Activated T-helper 1 cell treated with anti-CD3 and anti-CD28 coated beads, Interleukin-12 subunit alpha, Interleukin-12 subunit beta, Interleukin-2, Interleukin-4 antibody, amounts not matched to agents 30 ng/mL and 10 ng/mL and 1 ng/mL, durations not matched to agents 14 hours and 24 hours and 36 hours (primary cell): ENCODE measurements at regions of chr5 and their contacts with region 1.

Region 1: DNA sequence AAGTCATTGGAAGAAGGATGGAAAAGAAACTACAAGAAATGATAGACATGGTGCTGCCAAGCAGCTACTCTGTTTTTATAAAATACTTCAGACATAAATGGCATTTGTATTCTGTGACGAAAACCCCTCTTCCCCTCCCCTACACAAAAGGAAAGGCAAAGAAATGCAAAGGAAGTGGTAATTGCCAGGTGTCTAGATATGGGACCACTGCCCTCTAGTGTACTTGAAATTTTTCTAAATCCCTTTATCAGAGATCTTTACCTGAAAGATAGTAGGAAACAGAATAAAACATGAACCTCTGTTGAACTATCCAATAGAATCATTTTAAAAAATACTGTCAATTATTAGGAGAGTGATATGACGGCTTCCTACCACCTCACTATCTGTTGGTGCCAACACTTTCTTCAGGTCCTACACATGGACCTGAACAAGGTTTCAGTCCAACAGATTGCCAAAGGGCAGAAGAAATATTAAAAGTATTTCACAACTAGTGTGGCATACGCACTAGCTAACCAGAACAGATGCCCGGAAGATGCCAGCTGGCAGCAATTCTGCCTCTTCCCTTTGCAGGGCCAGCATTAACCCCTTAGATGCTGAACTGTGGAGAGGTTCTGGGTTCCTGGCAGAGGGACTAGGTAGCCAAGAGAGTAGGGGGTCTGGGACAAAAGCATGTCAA is 104.1 kb downstream of the TSSK1B start:
- DNase-seq: no peak
- H3K4me3 Mint-ChIP-seq: no peak overlapping the region
- H3K27ac Mint-ChIP-seq: no peak overlapping the region
- H3K4me1 Mint-ChIP-seq: peaks cover 14% of the 10 kb centered on the region
- H3K27me3 Mint-ChIP-seq: peaks cover 6% of the 10 kb centered on the region

Region 2: DNA sequence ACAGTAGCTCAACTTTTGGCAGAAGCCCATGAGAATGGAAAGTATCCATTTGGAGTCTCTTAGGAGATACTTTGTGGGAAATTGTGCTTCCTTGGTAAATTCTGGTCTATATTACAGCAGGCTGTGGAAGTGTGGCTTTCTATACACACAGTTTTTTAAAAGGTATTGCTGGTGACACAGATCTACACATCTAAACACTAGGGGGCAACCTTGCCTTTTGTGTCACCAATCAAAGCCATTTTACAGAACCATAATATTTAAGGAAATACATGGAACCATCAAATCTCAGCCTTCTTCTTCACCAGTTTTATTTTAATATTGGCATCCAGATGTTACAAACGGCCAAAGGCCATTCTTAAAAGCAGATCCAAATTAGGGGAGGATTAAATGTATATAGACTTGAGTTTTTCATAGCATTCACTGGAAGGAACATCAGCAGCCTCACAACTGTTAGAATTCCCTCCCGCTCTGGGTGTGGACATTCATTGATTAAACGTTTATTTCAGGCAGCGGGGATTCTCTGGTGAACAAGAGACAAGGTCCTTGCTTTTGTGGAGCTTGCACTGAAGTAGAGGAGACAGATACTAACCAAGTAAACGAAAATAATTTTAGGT is 779.1 kb before region 1 on chr5:
- intact Hi-C with region 1: loop called (anchors 2 kb)
- DNase-seq: peak; percentile 14
- H3K4me3 Mint-ChIP-seq: no peak overlapping the region
- H3K27ac Mint-ChIP-seq: no peak overlapping the region
- H3K4me1 Mint-ChIP-seq: no peaks in the 10 kb centered on the region
- H3K27me3 Mint-ChIP-seq: peaks cover 15% of the 10 kb centered on the region

Region 3: GRCh38 chr5:113378959-113379541 is 48.4 kb after region 1 on chr5:
- intact Hi-C with region 1: loop called (anchors 2 kb)
- DNase-seq: peak; percentile 24
- H3K4me3 Mint-ChIP-seq: peak overlapping the region; percentile 24
- H3K27ac Mint-ChIP-seq: no peak overlapping the region
- H3K4me1 Mint-ChIP-seq: peaks cover 36% of the 10 kb centered on the region
- H3K27me3 Mint-ChIP-seq: peaks cover 21% of the 10 kb centered on the region

Region 4: GRCh38 chr5:113390224-113390623 is 59.6 kb after region 1 on chr5:
- intact Hi-C with region 1: no loop called
- DNase-seq: no peak
- H3K4me3 Mint-ChIP-seq: no peak overlapping the region
- H3K27ac Mint-ChIP-seq: no peak overlapping the region
- H3K4me1 Mint-ChIP-seq: no peaks in the 10 kb centered on the region
- H3K27me3 Mint-ChIP-seq: peaks cover 25% of the 10 kb centered on the region

Region 5: DNA sequence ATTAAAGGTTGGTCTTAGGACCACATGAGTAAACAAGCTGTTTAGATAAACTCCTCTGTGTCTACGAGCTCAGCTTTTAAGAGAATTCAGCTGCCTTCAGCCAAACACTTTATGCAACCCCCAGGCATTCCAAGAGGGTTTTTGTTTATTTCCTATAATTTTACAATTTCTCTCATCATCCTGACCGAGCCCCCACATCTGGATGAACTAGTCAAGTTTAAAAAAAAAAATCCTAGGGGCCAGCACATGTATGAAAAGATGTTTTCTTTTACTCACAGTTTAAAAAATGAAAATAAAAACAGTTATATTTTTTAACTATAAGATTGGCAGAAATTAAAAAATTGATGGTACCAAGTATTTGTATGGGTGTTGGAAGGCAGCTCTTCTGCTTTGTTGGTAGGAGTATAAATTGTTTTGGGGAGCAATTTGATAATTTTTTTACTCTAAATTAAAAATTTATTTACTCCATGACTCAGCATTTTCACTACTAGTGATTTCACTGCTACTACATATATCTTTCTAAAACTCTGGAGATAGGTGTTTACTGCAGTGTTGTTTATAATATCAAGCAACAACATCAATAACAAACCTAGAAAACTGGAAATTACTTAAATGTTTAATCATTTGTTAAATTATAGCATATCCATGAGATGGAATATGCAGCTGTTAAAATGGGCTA is 200.9 kb after region 1 on chr5:
- intact Hi-C with region 1: no loop called
- DNase-seq: no peak
- H3K4me3 Mint-ChIP-seq: no peak overlapping the region
- H3K27ac Mint-ChIP-seq: no peak overlapping the region
- H3K4me1 Mint-ChIP-seq: no peaks in the 10 kb centered on the region
- H3K27me3 Mint-ChIP-seq: no peaks in the 10 kb centered on the region